ENCODE measurements at regions of chr17 and their contacts with region 1.

Region 1: GRCh38 chr17:76121932-76122430 is 18.4 kb upstream of the EXOC7 start:
- DNase-seq: peak in 2 of 3 donors; percentile 72 to 73
- ATAC-seq: peak; percentile 41 to 49
- H3K4me3 ChIP-seq: peak overlapping the region; percentile 33
- H3K27ac ChIP-seq: no peak overlapping the region
- H3K4me1 ChIP-seq: no peaks in the 10 kb centered on the region
- H3K27me3 ChIP-seq: no peaks in the 10 kb centered on the region

Region 2: GRCh38 chr17:76182016-76182764 is 60.2 kb after region 1 on chr17:
- intact Hi-C with region 1: loop called in 3 of 4 experiments (anchors 5 to 10 kb)
- DNase-seq: peak; percentile 82 to 95 (median 93)
- ATAC-seq: peak; percentile 85 to 89
- H3K4me3 ChIP-seq: no peak overlapping the region
- H3K27ac ChIP-seq: no peak overlapping the region
- H3K4me1 ChIP-seq: no peaks in the 10 kb centered on the region
- H3K27me3 ChIP-seq: no peaks in the 10 kb centered on the region

Region 3: GRCh38 chr17:76278952-76279741 is 157.2 kb after region 1 on chr17:
- intact Hi-C with region 1: loop called (anchors 1 to 5 kb)
- DNase-seq: peak; percentile 88 to 96 (median 96)
- ATAC-seq: peak; percentile 84 to 85
- H3K4me3 ChIP-seq: no peak overlapping the region
- H3K27ac ChIP-seq: no peak overlapping the region
- H3K4me1 ChIP-seq: no peaks in the 10 kb centered on the region
- H3K27me3 ChIP-seq: no peaks in the 10 kb centered on the region

Region 4: DNA sequence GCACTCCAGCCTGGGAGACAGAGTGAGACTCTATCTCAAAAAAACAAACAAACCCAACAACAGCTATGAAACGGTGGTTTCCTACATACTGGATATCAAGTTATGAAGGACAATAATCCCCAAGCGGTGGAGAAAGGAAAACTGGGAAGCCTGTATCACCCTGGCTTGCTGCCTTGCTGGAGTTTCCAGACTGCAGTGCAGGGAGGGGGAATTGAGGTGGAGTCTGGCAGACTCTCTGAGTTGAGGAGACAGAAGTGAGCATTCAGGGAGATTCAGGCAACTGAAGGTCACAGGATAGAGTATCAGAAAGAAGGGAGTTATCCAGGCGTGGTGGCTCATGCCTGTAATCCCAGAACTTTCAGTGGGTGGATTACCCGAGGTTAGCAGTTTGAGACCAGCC is 174.2 kb after region 1 on chr17:
- intact Hi-C with region 1: loop called in 1 of 4 experiments (anchors 5 kb)
- DNase-seq: no peak
- ATAC-seq: peak; percentile 62 to 66
- H3K4me3 ChIP-seq: no peak overlapping the region
- H3K27ac ChIP-seq: no peak overlapping the region
- H3K4me1 ChIP-seq: no peaks in the 10 kb centered on the region
- H3K27me3 ChIP-seq: no peaks in the 10 kb centered on the region

Measured in right cardiac atrium (tissue), 5 donors.